CD8-positive, alpha-beta T cell (primary cell): ENCODE measurements at regions of chr14 and their contacts with region 1.

Region 1: DNA sequence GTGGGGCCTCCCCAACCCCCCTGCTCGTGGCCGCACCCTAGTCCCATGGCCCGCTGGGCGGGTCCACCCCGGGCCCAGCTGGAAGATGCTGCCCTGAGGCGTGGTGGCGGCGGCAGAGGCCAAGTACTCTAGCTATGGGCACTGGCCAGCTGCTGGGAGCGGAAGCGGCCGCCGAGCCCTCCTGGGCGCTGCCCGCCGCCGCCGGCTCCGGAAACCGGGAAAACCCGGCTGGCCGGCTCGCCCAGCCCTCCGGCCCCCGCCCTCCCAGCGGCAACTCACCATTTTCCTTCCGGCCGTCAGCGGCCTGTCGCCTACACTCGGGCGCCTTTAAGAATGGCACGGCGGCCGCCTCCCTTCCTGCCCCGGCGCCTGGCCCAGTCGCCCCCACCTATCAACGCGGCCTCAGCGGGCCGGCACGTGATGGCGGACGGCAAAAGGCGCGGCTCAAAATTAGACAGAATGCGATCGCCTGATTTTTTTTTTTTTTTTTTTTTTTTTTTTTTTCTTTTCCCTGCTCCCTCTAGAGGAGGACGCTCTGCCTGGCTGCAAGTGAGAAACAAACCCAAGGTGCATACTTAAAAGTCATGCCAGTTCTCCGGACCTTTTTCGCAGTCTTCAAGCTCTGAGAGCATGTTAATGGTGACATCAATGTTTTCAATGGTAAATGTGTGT is at the start of gene GMFB:
- DNase-seq: peak; percentile 77 to 94 (median 89)
- ATAC-seq: peak; percentile 96
- H3K4me3 ChIP-seq: peak within 1 kb of the TSS; percentile 73 to 92
- H3K4me3 Mint-ChIP-seq: peak within 1 kb of the TSS; percentile 90
- H3K27ac ChIP-seq: peak within 1 kb of the TSS; percentile 66 to 89
- H3K27ac Mint-ChIP-seq: peak within 1 kb of the TSS; percentile 94
- H3K4me1 ChIP-seq: peaks cover 38% of the 10 kb centered on the region
- H3K4me1 Mint-ChIP-seq: peaks cover 61% of the 10 kb centered on the region
- H3K27me3 ChIP-seq: no peaks in the 10 kb centered on the region
- H3K27me3 Mint-ChIP-seq: no peaks in the 10 kb centered on the region
- CTCF ChIP-seq: peak; percentile 17
- total RNA-seq, gene GMFB: 33.7 to 34.0 TPM

Region 2: DNA sequence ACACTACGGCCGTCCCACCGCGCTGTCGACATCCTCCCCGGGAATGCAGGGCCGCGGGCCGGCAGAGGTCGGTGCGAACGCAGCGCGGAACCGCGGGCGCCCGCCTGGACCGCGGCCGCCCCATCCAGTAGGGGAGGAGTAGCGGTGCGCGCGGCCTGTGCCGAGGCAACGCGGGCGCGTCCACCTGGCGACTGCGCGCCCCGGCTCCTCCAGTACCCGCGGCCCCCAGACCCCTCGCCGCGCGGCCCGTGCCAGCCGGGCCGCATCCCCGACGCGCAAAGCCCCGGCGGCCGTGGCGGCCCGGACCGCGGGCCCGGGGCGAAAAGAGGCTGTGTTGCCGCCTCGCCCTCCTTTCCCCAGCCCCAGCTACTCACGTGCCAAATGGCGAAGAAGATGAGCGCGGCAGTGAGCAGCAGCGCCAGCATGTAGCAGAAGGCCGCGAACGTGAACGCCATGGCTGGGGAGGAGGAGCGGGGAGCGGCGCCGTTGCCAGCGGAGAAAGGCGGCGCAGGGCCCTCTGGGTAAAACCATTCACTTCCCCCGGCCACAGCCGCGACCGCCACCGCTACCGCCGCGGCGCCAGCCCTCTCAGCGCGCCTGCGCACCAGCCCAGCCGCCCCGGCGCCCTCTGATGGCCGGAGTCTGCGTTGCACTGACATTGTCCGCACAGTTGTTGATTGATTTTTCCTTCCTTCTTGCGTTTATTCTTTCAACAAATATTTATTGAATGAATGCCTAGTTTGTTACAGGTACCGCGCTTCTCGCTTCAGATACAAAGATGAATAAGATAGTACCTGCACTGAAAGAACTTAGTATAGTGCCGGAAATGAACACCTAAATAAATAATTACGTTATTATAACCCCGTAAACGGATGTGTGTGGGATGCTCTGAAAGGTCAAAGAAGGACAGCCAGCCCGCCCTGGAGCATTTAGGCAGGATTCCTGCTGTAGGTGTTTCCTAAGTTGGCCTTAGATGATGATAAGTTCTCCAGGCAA is 47.6 kb before region 1 on chr14 and contains the start of gene CNIH1:
- CTCF ChIA-PET with region 1: interaction called, 3 read pairs
- POLR2A ChIA-PET with region 1: interaction called, 3 read pairs
- intact Hi-C with region 1: loop called (anchors 1 kb)
- DNase-seq: peak; percentile 88 to 98 (median 93)
- ATAC-seq: peak; percentile 92
- H3K4me3 ChIP-seq: peak within 1 kb of the TSS; percentile 45 to 66
- H3K4me3 Mint-ChIP-seq: peak within 1 kb of the TSS; percentile 93
- H3K27ac ChIP-seq: peak within 1 kb of the TSS; percentile 76 to 81
- H3K27ac Mint-ChIP-seq: peak within 1 kb of the TSS; percentile 96
- H3K4me1 ChIP-seq: peaks cover 18% of the 10 kb centered on the region
- H3K4me1 Mint-ChIP-seq: peaks cover 41% of the 10 kb centered on the region
- H3K27me3 ChIP-seq: no peaks in the 10 kb centered on the region
- H3K27me3 Mint-ChIP-seq: no peaks in the 10 kb centered on the region
- CTCF ChIP-seq: peak; percentile 99
- total RNA-seq, gene CNIH1: 49.2 to 55.6 TPM

Region 3: GRCh38 chr14:54509546-54510501 is 21.0 kb after region 1 on chr14 and contains the start of gene CGRRF1:
- CTCF ChIA-PET with region 1: interaction called, 3 read pairs
- POLR2A ChIA-PET with region 1: interaction called, 17 read pairs
- intact Hi-C with region 1: loop called (anchors 1 kb)
- DNase-seq: peak; percentile 90 to 98 (median 96)
- ATAC-seq: peak; percentile 95
- H3K4me3 ChIP-seq: peak within 1 kb of the TSS; percentile 92 to 99
- H3K4me3 Mint-ChIP-seq: peak within 1 kb of the TSS; percentile 96
- H3K27ac ChIP-seq: peak within 1 kb of the TSS; percentile 73 to 92
- H3K27ac Mint-ChIP-seq: peak within 1 kb of the TSS; percentile 92
- H3K4me1 ChIP-seq: peaks cover 31% of the 10 kb centered on the region
- H3K4me1 Mint-ChIP-seq: peaks cover 51% of the 10 kb centered on the region
- H3K27me3 ChIP-seq: no peaks in the 10 kb centered on the region
- H3K27me3 Mint-ChIP-seq: peaks cover 4% of the 10 kb centered on the region
- CTCF ChIP-seq: peak; percentile 64
- total RNA-seq, gene CGRRF1: 59.6 to 59.9 TPM

Region 4: GRCh38 chr14:54606178-54606577 is 117.4 kb after region 1 on chr14:
- CTCF ChIA-PET with region 1: no interaction called
- POLR2A ChIA-PET with region 1: no interaction called
- intact Hi-C with region 1: no loop called
- DNase-seq: no peak
- ATAC-seq: no peak
- H3K4me3 ChIP-seq: no peak overlapping the region
- H3K4me3 Mint-ChIP-seq: no peak overlapping the region
- H3K27ac ChIP-seq: no peak overlapping the region
- H3K27ac Mint-ChIP-seq: no peak overlapping the region
- H3K4me1 ChIP-seq: no peaks in the 10 kb centered on the region
- H3K4me1 Mint-ChIP-seq: no peaks in the 10 kb centered on the region
- H3K27me3 ChIP-seq: peaks cover 0 to under 1% of the 10 kb centered on the region in 2 experiments
- H3K27me3 Mint-ChIP-seq: peaks cover 9% of the 10 kb centered on the region
- CTCF ChIP-seq: no peak

Region 5: GRCh38 chr14:55191203-55192053 is 702.6 kb after region 1 on chr14 and contains the start of gene DLGAP5:
- CTCF ChIA-PET with region 1: no interaction called
- POLR2A ChIA-PET with region 1: no interaction called
- intact Hi-C with region 1: loop called in 1 of 2 experiments (anchors 10 kb)
- DNase-seq: peak; percentile 71 to 96 (median 85)
- ATAC-seq: peak; percentile 98
- H3K4me3 ChIP-seq: peak within 1 kb of the TSS; percentile 66 to 76
- H3K4me3 Mint-ChIP-seq: peak within 1 kb of the TSS; percentile 92
- H3K27ac ChIP-seq: peak within 1 kb of the TSS; percentile 9 to 52
- H3K27ac Mint-ChIP-seq: peak within 1 kb of the TSS; percentile 22
- H3K4me1 ChIP-seq: peaks cover 11% of the 10 kb centered on the region
- H3K4me1 Mint-ChIP-seq: peaks cover 12% of the 10 kb centered on the region
- H3K27me3 ChIP-seq: no peaks in the 10 kb centered on the region
- H3K27me3 Mint-ChIP-seq: no peaks in the 10 kb centered on the region
- CTCF ChIP-seq: no peak
- total RNA-seq, gene DLGAP5: 0.54 TPM in 1 of 2 experiments, not detected in the other